Right ventricle myocardium superior (tissue), 1 donor: ENCODE measurements at regions of chr18 and their contacts with region 1.

Region 1: GRCh38 chr18:36697905-36698304 is 130.9 kb downstream of the TPGS2 start:
- DNase-seq: no peak
- ATAC-seq: no peak

Region 2: DNA sequence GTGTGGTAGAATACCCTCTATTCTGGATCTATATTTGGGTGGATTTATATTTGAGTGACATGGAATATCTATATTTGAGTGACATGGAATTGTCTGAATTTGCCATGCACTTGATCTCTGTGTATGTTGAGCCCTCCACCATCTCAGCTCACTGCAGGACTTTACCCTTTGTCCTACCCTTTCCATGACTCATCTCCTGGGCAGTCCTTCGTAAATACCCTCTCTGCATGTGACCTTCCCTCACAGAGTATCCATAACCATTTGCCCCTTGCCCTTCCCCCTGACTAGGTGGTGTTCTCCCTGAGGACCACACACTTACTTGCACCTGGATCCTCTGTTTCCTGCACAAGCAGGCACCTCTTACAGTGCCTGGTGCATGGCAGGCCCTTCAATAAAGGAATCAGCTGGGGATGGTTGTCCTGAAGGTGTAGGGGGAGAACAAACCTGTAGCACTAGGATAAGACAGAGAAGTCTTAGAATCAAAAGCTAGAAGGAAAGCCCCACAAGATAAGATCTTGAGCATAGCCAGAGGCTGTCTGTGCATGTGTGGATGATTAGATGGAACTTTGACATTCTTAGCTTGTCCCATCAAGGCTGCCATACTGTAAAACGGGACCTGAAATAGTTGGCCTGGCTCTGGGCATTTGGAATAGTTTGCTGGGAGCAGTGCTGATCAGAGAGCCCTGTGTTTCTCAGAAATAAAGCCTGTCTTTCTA is 170.0 kb before region 1 on chr18:
- intact Hi-C with region 1: no loop called
- DNase-seq: no peak
- ATAC-seq: no peak

Region 3: DNA sequence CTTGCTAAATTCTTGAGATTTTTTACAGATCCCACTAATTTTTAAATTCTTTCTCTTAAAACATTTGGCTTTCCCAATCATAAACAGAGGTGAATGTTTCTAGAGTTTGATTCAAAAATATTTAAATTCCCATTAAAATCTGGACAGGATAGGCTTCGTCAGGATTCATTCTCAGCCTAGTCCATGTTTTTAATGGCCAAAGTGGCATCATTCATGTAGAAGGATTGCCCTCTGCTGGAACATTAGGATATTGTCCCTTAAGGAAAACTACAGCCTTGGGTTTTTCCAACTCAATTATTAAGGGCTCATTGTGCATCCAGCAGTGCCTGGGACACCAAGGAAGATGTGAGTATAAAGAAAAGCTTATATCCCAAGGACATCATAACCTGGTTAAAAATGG is 59.2 kb after region 1 on chr18:
- intact Hi-C with region 1: loop called (anchors 5 kb)
- DNase-seq: no peak
- ATAC-seq: peak; percentile 51